Sigmoid colon (tissue), 7 donors: ENCODE measurements at regions of chr19 and their contacts with region 1.

Region 1: DNA sequence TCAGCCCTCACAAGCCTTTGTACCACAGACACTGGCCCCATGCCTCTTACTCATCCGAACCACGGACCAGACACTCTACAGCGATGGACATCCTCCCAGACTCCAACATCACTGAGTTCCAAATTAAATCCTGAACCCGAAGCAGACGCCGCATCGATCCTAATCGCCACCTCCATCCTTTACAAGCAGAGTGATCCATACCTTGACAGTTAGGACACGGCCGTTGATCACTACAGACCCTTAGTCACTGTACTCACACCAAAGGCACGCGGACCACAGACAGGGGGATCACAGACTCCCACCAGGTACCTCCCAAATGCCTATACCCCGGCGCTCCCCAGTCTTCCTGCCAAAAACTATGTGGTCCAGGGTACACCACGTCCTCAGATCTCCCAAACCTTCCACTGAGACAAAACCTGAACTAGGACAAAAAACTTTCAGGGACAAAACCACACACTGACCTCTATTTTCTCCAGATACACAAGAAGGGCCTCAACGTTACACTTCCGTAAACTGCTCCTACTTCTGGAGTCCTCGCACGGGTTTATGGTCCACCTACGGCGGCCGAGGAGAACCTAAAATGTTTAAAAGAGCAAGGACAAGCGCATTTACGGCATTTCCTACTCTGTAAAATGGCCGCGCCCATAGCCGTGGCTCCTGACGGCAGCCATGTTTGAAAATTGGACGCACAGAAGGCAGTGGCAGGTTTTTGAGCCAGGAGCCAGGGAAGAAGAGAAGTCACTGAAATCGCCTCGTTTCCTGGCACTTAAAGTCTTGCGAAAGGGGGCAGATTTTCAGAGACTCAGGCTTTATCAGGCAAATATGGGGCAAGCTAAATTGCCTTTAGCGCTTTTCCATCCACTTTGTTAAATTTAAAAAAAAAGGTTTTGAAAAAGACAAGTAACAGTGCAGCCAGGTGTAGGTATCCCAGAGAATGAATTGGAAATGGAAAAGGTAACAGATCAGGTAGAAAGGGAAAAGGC is at the start of gene ZNF350:
- DNase-seq: peak; percentile 94
- H3K4me3 ChIP-seq: peak within 1 kb of the TSS; percentile 65 to 91 (median 72)
- H3K27ac ChIP-seq: peak within 1 kb of the TSS; percentile 74 to 84 (median 78)
- H3K4me1 ChIP-seq: peaks cover 0 to 17% (median 14%) of the 10 kb centered on the region in 4 donors
- H3K27me3 ChIP-seq: no peaks in the 10 kb centered on the region
- CTCF ChIP-seq: no peak
- EP300 ChIP-seq: peak in 2 of 4 donors; percentile 32 to 57
- POLR2A ChIP-seq: no peak
- total RNA-seq, gene ZNF350: 11.0 to 19.7 (median 14.9) TPM

Region 2: DNA sequence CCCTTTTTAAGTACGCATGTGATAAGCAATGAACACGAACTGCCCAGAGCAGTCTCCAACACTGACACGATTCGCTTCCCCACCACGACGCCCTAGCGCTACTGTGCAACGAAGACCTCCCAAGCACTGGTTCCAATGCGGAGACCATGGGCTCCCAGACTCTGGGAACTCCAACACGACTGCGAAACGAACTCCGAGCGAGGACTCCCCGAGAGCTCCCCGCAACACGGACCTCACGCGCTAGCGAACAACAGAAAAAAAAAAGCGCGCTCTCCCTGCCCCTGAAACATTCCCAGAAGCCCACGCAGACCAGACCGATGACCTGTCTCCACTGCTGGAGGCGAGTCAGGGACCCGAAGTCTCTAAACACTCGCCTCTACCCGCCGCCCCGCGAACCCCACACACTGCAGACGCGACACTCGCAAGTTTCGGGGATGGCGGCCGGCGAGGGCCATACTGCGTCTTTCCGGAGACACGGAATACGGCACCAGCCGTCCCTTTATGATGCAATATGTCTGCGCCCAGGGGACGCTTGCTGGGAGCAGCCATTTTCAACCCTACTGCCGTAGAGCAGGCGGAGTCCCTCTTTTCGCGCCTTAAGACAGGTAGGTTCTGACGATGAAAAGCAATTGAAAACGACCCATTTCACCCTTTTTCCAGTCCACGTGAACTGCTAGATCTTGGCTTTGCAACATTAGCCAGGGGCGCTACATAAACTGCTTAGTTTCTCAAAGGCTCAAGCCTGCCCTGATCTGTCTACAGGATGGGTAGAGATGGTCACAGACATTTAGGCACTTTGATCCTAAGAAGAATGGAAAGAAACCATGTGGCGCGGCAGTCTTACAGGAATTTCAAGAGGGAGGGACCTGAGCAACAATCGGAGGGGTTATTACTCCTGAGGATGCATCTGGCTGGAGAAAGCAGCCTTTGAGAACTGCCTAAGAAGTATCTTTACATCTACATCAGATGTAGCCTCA is 98.8 kb before region 1 on chr19 and contains the start of gene ZNF577:
- intact Hi-C with region 1: loop called (anchors 5 kb)
- DNase-seq: peak; percentile 94
- H3K4me3 ChIP-seq: peak within 1 kb of the TSS; percentile 58 to 72 (median 62)
- H3K27ac ChIP-seq: peak within 1 kb of the TSS; percentile 80 to 83 (median 80)
- H3K4me1 ChIP-seq: peaks cover 0 to 14% (median 10%) of the 10 kb centered on the region in 4 donors
- H3K27me3 ChIP-seq: no peaks in the 10 kb centered on the region
- CTCF ChIP-seq: no peak
- EP300 ChIP-seq: peak in 1 of 4 donors; percentile 48
- POLR2A ChIP-seq: no peak
- total RNA-seq, gene ZNF577: 21.7 to 28.0 (median 23.4) TPM

Region 3: DNA sequence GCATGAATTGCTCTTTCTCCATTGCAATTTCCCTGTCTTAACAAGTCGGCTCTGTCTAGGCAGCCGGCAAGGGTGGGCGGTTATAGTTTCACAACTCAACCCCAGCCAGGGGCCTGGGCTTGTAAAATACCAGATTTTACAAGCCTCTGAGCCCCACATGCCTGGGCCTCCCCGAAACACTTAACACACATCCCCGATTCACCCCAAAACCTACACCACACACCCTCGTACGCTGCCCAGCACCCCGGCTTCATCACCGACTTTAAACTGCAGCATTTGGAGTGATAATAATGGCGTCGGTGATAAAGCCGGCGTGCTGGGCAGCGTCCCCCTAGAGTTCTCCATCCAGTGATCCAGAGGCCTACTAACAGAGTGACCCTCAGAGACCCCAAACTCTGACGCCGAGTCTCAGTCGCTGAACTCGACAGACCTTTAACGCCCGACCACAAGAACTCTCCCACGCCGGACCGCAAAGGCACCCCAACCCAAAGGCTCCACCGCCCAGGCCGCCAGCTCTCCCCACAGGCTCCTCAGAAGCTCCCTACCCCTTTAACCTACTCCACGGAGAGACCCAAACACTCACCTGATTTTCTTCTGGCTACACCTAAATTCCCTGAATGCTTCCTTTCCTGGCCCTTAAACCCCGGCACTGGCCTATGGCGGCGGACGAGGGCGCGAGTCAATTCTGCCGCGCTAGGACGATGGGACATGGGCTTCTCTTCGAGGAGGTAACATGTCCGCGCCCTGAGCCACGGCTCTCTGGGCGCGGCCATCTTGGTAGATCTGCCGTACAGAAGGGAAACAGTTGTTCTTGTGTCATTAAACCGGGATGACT is 82.1 kb before region 1 on chr19 and contains the start of gene ZNF649:
- intact Hi-C with region 1: loop called (anchors 5 kb)
- DNase-seq: peak; percentile 84
- H3K4me3 ChIP-seq: peak within 1 kb of the TSS; percentile 62 to 82 (median 74)
- H3K27ac ChIP-seq: peak within 1 kb of the TSS; percentile 82 to 89 (median 87)
- H3K4me1 ChIP-seq: peaks cover 0 to 15% (median 12%) of the 10 kb centered on the region in 4 donors
- H3K27me3 ChIP-seq: peaks cover 0 to 21% (median 0%) of the 10 kb centered on the region in 3 donors
- CTCF ChIP-seq: no peak
- EP300 ChIP-seq: no peak
- POLR2A ChIP-seq: peak in 1 of 2 donors; percentile 24
- total RNA-seq, gene ZNF649: 10.5 to 14.6 (median 12.1) TPM

Region 4: GRCh38 chr19:52007806-52008557 is 21.4 kb after region 1 on chr19 and contains the start of gene ZNF615:
- intact Hi-C with region 1: loop called (anchors 2 kb)
- DNase-seq: peak; percentile 93
- H3K4me3 ChIP-seq: peak within 1 kb of the TSS; percentile 63 to 83 (median 75)
- H3K27ac ChIP-seq: peak within 1 kb of the TSS; percentile 81 to 91 (median 86)
- H3K4me1 ChIP-seq: peaks cover 0 to 11% (median 8%) of the 10 kb centered on the region in 4 donors
- H3K27me3 ChIP-seq: no peaks in the 10 kb centered on the region
- CTCF ChIP-seq: no peak
- EP300 ChIP-seq: no peak
- POLR2A ChIP-seq: peak in 1 of 2 donors; percentile 35
- total RNA-seq, gene ZNF615: 18.0 to 26.8 (median 22.5) TPM

Region 5: DNA sequence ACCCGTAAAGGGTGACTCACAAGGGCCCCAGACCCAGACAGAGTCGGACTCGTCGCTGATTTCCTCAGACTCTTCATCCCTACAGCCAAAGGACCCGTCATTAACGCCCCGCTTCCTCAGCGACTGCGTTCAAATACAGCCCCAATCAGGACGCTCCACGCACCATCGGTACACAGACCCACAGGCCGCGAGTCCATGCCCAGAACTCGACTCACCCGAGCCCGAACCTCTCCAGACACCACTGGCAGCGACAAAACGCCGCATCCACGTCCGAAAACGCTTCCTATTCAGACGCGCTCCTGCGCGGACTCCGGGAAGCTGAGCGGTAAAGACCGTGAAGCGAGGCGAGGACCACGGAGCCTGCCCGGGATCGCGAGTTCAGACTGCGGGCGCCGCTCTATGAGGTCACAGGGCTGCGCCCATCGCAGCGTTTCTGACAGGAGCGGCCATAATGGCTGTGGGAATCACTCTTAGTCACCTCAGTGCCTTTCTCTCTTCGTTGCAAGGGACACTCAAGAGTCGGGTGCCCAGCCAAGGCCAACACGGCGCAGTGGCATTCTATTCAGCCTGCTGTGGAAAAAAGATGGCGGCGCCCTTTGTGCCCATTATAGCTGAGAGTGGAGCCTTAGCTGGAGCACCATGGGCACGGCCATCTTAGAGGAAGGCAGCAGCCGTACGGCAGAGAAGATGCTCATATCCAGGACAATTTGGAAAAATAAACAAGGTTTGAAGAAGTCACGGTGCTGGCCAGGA is 41.6 kb after region 1 on chr19 and contains the start of gene ZNF614:
- intact Hi-C with region 1: loop called (anchors 1 kb)
- DNase-seq: peak; percentile 90
- H3K4me3 ChIP-seq: peak within 1 kb of the TSS; percentile 57 to 87 (median 71)
- H3K27ac ChIP-seq: peak within 1 kb of the TSS; percentile 90 to 94 (median 92)
- H3K4me1 ChIP-seq: peaks cover 0 to 23% (median 14%) of the 10 kb centered on the region in 4 donors
- H3K27me3 ChIP-seq: no peaks in the 10 kb centered on the region
- CTCF ChIP-seq: no peak
- EP300 ChIP-seq: no peak
- POLR2A ChIP-seq: peak; percentile 9 to 59
- total RNA-seq, gene ZNF614: 6.6 to 13.5 (median 10.7) TPM

Region 6: DNA sequence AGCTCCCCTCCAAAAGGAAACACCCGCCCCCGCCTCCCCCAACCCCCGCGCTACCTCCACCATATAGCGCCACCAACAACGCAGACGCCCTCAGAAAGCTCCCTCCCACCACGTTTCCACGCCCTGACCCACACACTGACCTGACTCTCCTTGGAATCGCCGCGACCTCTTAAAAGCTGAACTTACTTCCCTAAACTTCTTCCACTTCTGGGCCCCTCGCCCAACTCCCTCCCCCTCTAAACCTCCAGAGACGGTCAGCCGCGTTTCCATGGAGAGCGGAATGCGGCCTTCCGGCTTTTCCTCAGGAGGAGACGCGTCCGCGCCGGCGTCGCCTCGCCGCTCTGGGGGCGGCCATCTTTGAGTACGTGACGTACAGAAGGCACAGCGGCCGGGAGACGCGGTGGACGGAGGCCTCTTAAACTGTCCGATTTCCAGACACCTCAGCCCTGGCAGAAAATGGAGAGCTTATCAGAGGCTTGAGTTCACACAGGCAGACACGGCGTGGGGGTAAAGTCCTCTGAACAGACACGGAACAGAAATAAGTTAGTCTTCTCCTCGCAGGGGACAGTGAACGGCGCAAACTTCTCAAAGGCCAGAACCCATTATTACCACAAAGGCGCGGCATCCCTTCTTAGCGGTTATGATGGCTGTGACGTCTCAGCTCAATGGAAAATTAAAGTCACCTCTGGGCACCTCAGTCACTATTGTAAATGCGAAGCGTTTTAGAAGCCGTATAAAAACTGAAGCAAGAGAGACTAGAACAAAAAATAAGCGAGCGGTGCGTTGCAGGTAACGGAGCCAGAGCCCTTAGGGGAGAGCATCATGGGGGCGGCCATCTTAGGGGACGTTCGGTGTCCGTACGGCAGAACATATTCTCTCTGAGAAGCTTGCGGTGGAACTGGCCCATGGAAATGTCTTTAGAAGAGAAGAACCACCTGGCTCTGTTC is 62.2 kb after region 1 on chr19 and contains the start of gene ZNF432:
- intact Hi-C with region 1: loop called (anchors 2 kb)
- DNase-seq: peak; percentile 97
- H3K4me3 ChIP-seq: peak within 1 kb of the TSS; percentile 57 to 71 (median 66)
- H3K27ac ChIP-seq: peak within 1 kb of the TSS; percentile 90 to 94 (median 92)
- H3K4me1 ChIP-seq: peaks cover 0 to 4% (median 0%) of the 10 kb centered on the region in 4 donors
- H3K27me3 ChIP-seq: no peaks in the 10 kb centered on the region
- CTCF ChIP-seq: no peak
- EP300 ChIP-seq: peak in 1 of 4 donors; percentile 8
- POLR2A ChIP-seq: peak in 1 of 2 donors; percentile 27
- total RNA-seq, gene ZNF432: 10.0 to 17.1 (median 11.9) TPM

Region 7: GRCh38 chr19:52095172-52096014 is 108.8 kb after region 1 on chr19 and contains the start of gene ZNF841:
- intact Hi-C with region 1: loop called (anchors 1 kb)
- DNase-seq: peak; percentile 98
- H3K4me3 ChIP-seq: peak within 1 kb of the TSS; percentile 69 to 91 (median 87)
- H3K27ac ChIP-seq: peak within 1 kb of the TSS; percentile 71 to 86 (median 80)
- H3K4me1 ChIP-seq: peaks cover 0 to 28% (median 20%) of the 10 kb centered on the region in 4 donors
- H3K27me3 ChIP-seq: no peaks in the 10 kb centered on the region
- CTCF ChIP-seq: no peak
- EP300 ChIP-seq: no peak
- POLR2A ChIP-seq: peak; percentile 51 to 54
- total RNA-seq, gene ZNF841: 11.8 to 26.6 (median 12.7) TPM